ENCODE measurements at regions of chr4 and their contacts with region 1.

Region 1: DNA sequence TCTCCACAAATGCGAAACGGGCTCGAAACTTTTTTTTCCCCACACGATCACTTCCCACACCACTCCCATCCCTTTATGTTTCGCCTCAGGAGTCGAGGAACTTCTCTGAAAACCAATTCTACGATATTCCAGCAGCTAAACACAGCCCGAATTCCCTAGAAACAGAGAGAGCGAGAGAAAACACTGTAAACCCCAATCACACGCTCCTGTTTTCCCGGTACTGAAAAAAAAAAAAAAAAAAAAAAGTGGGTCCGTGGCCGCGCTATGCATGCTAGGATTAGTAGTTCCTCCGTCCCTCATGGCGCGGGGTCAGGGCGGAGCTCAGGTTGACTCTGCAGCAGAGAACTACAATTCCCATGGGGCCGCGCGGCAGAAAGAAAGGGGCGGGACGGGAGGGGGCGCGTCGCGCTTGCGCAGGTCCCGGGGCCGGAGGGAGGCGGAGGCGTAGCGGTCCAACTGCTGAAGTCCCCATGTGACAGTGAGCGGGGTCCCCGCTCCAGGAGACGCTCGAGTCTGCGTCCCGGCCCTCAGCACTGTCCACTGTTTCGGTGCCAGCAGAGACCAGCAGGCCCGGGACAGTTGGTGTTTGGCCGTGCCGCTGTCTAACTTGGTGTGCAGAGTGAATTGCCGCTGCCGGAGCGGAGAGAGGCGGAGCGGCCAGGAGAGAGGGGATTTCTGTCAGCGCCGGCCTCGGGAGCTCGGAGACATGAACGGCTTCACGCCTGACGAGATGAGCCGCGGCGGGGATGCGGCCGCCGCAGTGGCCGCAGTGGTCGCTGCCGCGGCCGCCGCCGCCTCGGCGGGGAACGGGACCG is at the start of gene SAP30:
- DNase-seq: peak; percentile 98
- H3K4me3 Mint-ChIP-seq: peak within 1 kb of the TSS; percentile 98
- H3K27ac Mint-ChIP-seq: peak within 1 kb of the TSS; percentile 99
- H3K4me1 Mint-ChIP-seq: peaks cover 41% of the 10 kb centered on the region
- H3K27me3 Mint-ChIP-seq: no peaks in the 10 kb centered on the region
- total RNA-seq, gene SAP30: 15.2 to 22.0 TPM

Region 2: DNA sequence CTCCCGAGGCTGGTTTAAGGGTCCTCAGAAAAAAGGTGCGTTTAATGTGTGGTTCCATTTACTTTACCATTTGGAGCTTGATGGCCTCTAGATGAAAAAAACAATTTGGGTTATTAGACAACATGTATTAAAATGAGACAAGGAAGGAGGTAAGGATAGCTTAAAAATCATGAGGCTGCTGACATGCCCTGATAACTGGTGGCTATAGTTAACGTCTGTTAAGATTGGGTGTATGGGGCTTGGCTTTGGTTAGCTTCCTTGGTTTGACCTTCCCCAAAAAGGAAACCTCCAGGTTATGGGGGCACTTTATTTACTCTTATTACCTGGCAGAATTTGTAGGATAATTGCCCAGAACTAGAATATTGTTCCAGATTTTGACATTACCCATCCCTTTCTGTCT is 88.1 kb before region 1 on chr4:
- CTCF ChIA-PET with region 1: no interaction called
- POLR2A ChIA-PET with region 1: no interaction called
- DNase-seq: no peak
- H3K4me3 Mint-ChIP-seq: no peak overlapping the region
- H3K27ac Mint-ChIP-seq: no peak overlapping the region
- H3K4me1 Mint-ChIP-seq: no peaks in the 10 kb centered on the region
- H3K27me3 Mint-ChIP-seq: no peaks in the 10 kb centered on the region

Region 3: DNA sequence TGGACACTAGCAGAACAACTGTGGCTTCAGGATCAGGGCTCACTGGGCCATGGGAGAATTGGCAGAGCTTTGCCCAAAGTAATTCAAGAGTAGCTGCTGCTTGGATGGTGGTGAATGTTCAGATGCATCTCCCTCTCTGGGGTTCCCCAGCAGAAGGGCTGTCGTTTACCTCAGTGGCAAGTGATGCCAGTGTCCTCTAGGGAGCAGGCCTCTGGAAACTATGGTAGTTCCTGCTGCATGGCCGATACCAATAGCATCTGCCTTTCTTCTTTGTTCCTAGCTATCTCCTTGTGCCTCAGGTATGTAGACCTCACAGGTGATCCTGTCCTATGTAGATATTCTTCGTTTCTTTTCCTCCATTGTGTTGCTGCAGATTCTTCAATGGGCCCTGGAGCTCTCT is 62.9 kb before region 1 on chr4:
- CTCF ChIA-PET with region 1: no interaction called
- POLR2A ChIA-PET with region 1: no interaction called
- DNase-seq: no peak
- H3K4me3 Mint-ChIP-seq: no peak overlapping the region
- H3K27ac Mint-ChIP-seq: no peak overlapping the region
- H3K4me1 Mint-ChIP-seq: peaks cover 4% of the 10 kb centered on the region
- H3K27me3 Mint-ChIP-seq: no peaks in the 10 kb centered on the region

Region 4: GRCh38 chr4:173334085-173334772 is 36.5 kb before region 1 on chr4 and contains the start of gene HMGB2:
- CTCF ChIA-PET with region 1: interaction called, 8 read pairs
- POLR2A ChIA-PET with region 1: interaction called, 59 read pairs
- DNase-seq: peak; percentile 100
- H3K4me3 Mint-ChIP-seq: peak within 1 kb of the TSS; percentile 90
- H3K27ac Mint-ChIP-seq: peak within 1 kb of the TSS; percentile 100
- H3K4me1 Mint-ChIP-seq: peaks cover 42% of the 10 kb centered on the region
- H3K27me3 Mint-ChIP-seq: no peaks in the 10 kb centered on the region
- total RNA-seq, gene HMGB2: 975 to 1,039 TPM

Region 5: DNA sequence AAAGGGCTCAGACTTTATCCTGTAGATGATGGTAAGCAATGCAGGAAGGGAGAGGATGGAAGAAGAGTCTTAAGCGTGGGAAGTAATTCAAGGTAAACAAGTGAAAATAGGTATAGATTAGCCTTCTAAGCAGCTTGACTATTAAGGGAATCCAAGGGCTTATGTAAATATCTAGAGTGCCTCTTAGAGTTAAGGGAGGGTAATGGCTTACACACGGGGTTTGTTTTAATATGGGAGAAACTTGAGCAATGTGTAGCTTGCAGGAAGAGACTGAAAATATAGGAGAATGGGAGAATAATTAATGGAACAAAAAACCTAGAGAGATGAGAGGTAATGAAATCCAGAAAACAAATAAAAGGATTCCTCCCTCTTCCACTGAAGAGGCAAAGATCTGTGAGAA is 12.7 kb before region 1 on chr4:
- CTCF ChIA-PET with region 1: interaction called, 10 read pairs
- POLR2A ChIA-PET with region 1: no interaction called
- DNase-seq: no peak
- H3K4me3 Mint-ChIP-seq: no peak overlapping the region
- H3K27ac Mint-ChIP-seq: no peak overlapping the region
- H3K4me1 Mint-ChIP-seq: peaks cover 4% of the 10 kb centered on the region
- H3K27me3 Mint-ChIP-seq: peaks cover 3% of the 10 kb centered on the region

Region 6: GRCh38 chr4:173466101-173466500 is 95.4 kb after region 1 on chr4:
- CTCF ChIA-PET with region 1: no interaction called
- POLR2A ChIA-PET with region 1: no interaction called
- DNase-seq: no peak
- H3K4me3 Mint-ChIP-seq: no peak overlapping the region
- H3K27ac Mint-ChIP-seq: no peak overlapping the region
- H3K4me1 Mint-ChIP-seq: no peaks in the 10 kb centered on the region
- H3K27me3 Mint-ChIP-seq: peaks cover 18% of the 10 kb centered on the region